Heart right ventricle (tissue), 16 donors: ENCODE measurements at regions of chr16 and their contacts with region 1.

Region 1: GRCh38 chr16:3857189-3858043 is 23.1 kb downstream of the CREBBP start:
- DNase-seq: no peak
- ATAC-seq: peak; percentile 46 to 88 (median 54)
- H3K4me3 ChIP-seq: no peak overlapping the region
- H3K27ac ChIP-seq: peak overlapping the region in 4 of 10 donors; percentile 3 to 57 (median 33)
- H3K4me1 ChIP-seq: peaks cover 9 to 100% (median 95%) of the 10 kb centered on the region in 9 donors
- H3K27me3 ChIP-seq: no peaks in the 10 kb centered on the region
- CTCF ChIP-seq: no peak

Region 2: GRCh38 chr16:3819746-3820724 is 37.4 kb before region 1 on chr16:
- intact Hi-C with region 1: loop called in 2 of 10 experiments (anchors 5 to 10 kb)
- DNase-seq: peak in 1 of 2 donors; percentile 82
- ATAC-seq: peak; percentile 64 to 90 (median 86)
- H3K4me3 ChIP-seq: peak overlapping the region in 1 of 10 donors; percentile 25
- H3K27ac ChIP-seq: peak overlapping the region in 6 of 10 donors; percentile 22 to 65 (median 38)
- H3K4me1 ChIP-seq: peaks cover 26 to 100% (median 96%) of the 10 kb centered on the region in 9 donors
- H3K27me3 ChIP-seq: no peaks in the 10 kb centered on the region
- CTCF ChIP-seq: no peak